A549 (cell line): ENCODE measurements at regions of chr11 and their contacts with region 1.

Region 1: DNA sequence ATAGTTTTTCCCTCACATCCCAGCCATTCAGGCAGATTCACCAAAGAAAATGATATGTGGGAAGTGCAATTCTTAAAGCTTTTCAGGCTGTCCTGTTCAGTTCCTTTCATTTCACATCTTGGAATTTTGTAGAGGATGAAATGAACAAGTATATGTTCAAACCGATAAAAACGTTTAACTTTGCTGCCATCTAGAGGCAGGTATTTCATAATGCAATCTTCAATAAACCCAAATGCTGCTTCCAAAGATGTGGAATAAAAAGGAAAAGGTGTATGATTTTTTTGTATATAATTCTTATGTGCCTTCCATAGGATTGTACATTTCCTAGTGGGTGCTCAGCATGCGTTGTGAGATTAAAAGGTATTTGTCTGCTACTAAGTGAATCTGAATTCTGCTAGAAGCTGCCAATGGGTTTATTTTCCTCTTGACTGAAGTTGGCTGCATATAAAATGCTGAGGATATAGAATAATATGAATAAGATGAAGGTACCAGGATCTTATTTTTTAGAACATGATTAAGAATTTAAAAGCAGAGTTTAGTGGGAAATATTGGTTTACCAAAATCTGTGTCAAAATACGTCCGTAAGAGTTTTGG is 199.3 kb downstream of the PGR start:
- DNase-seq: peak; percentile 25 to 55
- ATAC-seq: peak; percentile 47 to 74; a peak in 3 of 6 replicates
- H3K4me3 ChIP-seq: no peak overlapping the region
- H3K27ac ChIP-seq: no peak overlapping the region
- H3K4me1 ChIP-seq: peaks cover 5% of the 10 kb centered on the region; the same call in 2 of the 3 replicates
- CTCF ChIP-seq: peak; percentile 69
- EP300 ChIP-seq: no peak
- POLR2A ChIP-seq: no peak
- RAD21 ChIP-seq: peak; percentile 69 to 72

Region 2: DNA sequence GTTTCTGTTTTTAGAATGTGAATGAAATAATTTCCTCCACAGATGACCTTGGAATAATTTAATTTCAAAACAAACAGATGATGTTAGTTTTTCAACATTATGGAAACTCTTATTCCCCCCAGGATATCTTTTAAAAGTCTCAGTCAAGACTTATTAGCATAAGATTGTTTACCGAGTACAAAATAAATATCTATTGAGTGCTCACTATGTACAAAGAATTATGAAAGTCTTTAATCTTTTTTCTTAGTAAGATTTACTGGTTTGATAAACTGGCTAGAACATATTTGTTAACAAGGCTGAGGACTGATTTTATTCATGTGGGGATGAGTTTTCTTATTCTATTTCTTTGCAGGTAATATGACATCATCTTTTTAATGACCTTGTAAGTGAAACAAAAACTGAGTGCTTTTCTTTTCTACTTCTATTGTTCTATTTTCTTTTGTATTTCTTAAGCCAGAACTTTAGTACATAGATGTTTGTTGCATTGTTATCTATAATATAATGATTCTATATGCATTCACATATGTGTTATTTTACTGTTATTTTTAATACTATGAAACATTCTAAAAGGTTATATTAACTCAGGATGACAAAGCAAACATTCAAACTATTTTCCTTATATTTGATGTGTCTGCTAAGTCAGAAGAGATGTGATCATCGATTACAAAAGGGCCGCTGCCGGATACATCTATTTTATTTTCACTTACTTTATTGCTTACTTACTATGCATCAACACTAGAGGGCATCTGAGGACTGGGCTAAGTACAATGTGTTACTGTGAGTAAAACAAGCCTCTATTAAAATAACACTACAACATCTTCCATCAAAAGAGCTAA is 354.2 kb before region 1 on chr11:
- CTCF ChIA-PET with region 1: interaction called, 10 read pairs
- POLR2A ChIA-PET with region 1: no interaction called
- DNase-seq: peak; percentile 21 to 52
- ATAC-seq: peak; percentile 71 to 83; a peak in 4 of 6 replicates
- H3K4me3 ChIP-seq: no peak overlapping the region
- H3K27ac ChIP-seq: no peak overlapping the region
- H3K4me1 ChIP-seq: peaks cover 3% of the 10 kb centered on the region; the same call in 2 of the 3 replicates
- CTCF ChIP-seq: peak; percentile 78
- EP300 ChIP-seq: no peak
- POLR2A ChIP-seq: no peak
- RAD21 ChIP-seq: peak; percentile 87 to 94

Region 3: DNA sequence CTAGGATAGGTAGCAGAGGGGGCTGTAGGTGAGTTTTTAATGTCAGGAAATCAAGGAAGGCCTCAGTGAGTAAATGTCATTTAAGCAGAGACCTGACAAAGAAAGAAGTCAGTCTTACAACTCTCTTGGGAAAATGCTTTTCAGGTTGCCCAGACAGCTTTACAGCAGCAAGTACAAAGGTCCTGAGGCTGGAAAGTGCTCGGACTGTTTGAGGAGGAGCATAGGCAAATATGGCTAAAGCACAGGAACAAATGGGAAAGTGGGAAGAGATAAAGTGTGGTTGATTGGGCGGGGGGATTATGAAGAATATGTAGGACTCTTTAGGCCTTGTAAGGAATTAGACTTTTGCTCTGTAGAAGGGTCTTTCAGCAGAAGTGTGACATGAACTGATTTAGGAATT is 117.8 kb before region 1 on chr11:
- CTCF ChIA-PET with region 1: no interaction called
- POLR2A ChIA-PET with region 1: no interaction called
- DNase-seq: no peak
- ATAC-seq: no peak
- H3K4me3 ChIP-seq: no peak overlapping the region
- H3K27ac ChIP-seq: no peak overlapping the region
- H3K4me1 ChIP-seq: peaks cover 30% of the 10 kb centered on the region
- CTCF ChIP-seq: no peak
- EP300 ChIP-seq: no peak
- POLR2A ChIP-seq: no peak
- RAD21 ChIP-seq: no peak

Region 4: DNA sequence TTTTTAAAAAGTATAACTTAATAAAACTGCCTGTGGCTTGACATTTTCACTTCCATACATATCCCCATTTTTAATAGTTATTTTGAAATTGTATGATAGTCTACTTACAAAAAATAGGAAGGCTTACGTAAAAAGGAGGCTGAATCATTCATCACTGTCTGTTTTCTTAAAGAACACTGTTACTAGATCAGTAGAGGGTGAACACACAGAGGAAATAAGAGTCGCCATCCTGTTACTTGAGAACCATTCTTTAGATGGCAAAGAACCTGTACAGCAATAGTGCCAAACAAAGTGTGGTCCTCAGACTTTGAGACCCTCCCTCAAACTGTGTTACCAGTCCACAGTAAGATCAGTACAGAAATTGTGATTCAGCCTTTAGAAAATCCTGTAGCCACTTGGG is 18.7 kb after region 1 on chr11:
- CTCF ChIA-PET with region 1: no interaction called
- POLR2A ChIA-PET with region 1: no interaction called
- DNase-seq: no peak
- ATAC-seq: no peak
- H3K4me3 ChIP-seq: no peak overlapping the region
- H3K27ac ChIP-seq: no peak overlapping the region
- H3K4me1 ChIP-seq: no peaks in the 10 kb centered on the region
- CTCF ChIP-seq: no peak
- EP300 ChIP-seq: no peak
- POLR2A ChIP-seq: no peak
- RAD21 ChIP-seq: no peak

Region 5: DNA sequence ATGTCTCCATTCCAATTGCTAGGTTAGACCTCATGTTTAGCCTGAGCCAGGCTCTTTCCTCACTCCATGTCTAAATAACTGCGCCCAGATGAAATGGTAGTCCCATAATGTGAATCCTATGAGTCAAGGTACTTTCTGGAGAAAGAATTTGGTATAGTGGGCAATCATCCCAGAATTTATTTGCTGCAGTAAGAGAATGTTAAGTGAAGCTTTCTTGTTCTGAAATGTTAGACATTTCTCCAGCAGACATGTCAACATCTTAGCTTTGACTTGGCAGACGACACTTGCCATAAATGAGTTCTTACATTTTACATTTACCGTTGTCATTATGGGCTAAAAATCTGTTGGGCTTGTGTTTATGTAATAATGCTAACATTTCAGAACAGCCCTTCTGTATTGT is 34.2 kb after region 1 on chr11:
- CTCF ChIA-PET with region 1: no interaction called
- POLR2A ChIA-PET with region 1: no interaction called
- DNase-seq: no peak
- ATAC-seq: no peak
- H3K4me3 ChIP-seq: no peak overlapping the region
- H3K27ac ChIP-seq: no peak overlapping the region
- H3K4me1 ChIP-seq: no peaks in the 10 kb centered on the region
- CTCF ChIP-seq: no peak
- EP300 ChIP-seq: no peak
- POLR2A ChIP-seq: no peak
- RAD21 ChIP-seq: no peak

Region 6: DNA sequence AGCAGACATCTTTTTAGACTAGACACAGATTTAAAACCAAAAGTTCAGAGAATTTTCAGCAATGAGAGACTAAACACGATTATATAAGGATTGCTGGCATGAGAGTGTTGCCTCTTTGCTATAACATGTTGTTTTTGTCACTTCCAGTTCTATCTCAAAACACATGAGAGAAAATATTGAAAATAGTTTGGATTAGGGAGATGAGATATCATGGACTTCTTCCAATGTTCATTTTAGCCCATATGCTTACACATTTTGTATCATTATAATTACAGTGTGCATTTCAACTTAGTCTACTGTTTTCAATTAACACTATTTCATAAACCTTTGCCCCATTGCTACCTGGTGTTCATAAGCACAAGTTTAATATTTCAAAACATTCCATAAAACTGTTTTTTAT is 375.2 kb after region 1 on chr11:
- CTCF ChIA-PET with region 1: no interaction called
- POLR2A ChIA-PET with region 1: no interaction called
- DNase-seq: no peak
- ATAC-seq: no peak
- H3K4me3 ChIP-seq: no peak overlapping the region
- H3K27ac ChIP-seq: no peak overlapping the region
- H3K4me1 ChIP-seq: no peaks in the 10 kb centered on the region
- CTCF ChIP-seq: no peak
- EP300 ChIP-seq: no peak
- POLR2A ChIP-seq: no peak
- RAD21 ChIP-seq: no peak